ENCODE measurements at regions of chr1 and their contacts with region 1.

Region 1: GRCh38 chr1:94061513-94062443 is 59.2 kb downstream of the ABCA4 start:
- DNase-seq: peak; percentile 76 to 88
- H3K4me3 ChIP-seq: no peak overlapping the region
- H3K27ac ChIP-seq: peak overlapping the region in 3 of 5 donors; percentile 27 to 50 (median 29)
- H3K4me1 ChIP-seq: peaks cover 0 to 36% (median 26%) of the 10 kb centered on the region in 4 donors
- H3K27me3 ChIP-seq: peaks cover 0 to 4% (median 0%) of the 10 kb centered on the region in 3 donors
- CTCF ChIP-seq: peak in 5 of 7 experiments; percentile 86 to 97 (median 90)
- EP300 ChIP-seq: no peak
- POLR2A ChIP-seq: no peak

Region 2: DNA sequence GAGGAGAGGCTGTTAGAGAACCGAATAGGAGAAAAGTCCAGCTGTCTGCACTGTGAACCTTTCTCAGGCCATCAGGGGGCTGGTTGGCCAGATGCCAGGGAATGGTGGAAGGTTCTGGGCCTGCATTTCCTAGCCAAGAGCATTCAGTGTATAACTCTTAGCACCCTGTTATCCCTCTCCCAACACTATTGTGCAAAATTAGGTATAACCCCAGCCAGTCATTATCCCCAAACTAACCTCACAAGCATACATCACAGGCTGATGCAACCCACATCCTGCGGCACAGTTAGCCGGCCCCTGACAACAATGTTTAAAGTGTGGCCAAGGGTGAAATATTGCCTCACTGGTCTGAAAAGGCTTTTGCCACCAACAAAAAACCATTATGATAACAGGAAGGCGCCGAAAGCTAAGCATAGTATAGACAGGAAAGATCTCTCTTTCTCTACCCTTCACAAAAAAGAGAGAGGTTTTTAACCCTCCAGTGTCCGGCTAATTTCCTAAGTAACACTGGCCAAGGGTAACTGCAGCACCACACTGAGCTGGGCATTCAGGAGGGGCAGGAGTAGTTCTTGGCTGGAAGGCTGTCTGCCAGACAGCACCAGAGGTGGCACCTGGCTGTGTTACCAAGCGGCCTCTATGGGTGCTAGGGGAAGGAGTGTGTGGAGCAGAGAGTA is 302.8 kb before region 1 on chr1:
- intact Hi-C with region 1: no loop called
- DNase-seq: peak in 1 of 2 donors; percentile 83
- H3K4me3 ChIP-seq: no peak overlapping the region
- H3K27ac ChIP-seq: no peak overlapping the region
- H3K4me1 ChIP-seq: peaks cover 0 to 23% (median 5%) of the 10 kb centered on the region in 4 donors
- H3K27me3 ChIP-seq: no peaks in the 10 kb centered on the region
- CTCF ChIP-seq: no peak
- EP300 ChIP-seq: no peak
- POLR2A ChIP-seq: no peak

Region 3: GRCh38 chr1:94329986-94330385 is 268.2 kb after region 1 on chr1:
- intact Hi-C with region 1: loop called (anchors 5 kb)
- DNase-seq: peak in 1 of 2 donors; percentile 59
- H3K4me3 ChIP-seq: no peak overlapping the region
- H3K27ac ChIP-seq: no peak overlapping the region
- H3K4me1 ChIP-seq: peaks cover 7 to 48% (median 28%) of the 10 kb centered on the region in 4 donors
- H3K27me3 ChIP-seq: no peaks in the 10 kb centered on the region
- CTCF ChIP-seq: peak in 4 of 7 experiments; percentile 9 to 43 (median 34)
- EP300 ChIP-seq: no peak
- POLR2A ChIP-seq: no peak